Uterus (tissue), 4 donors: ENCODE measurements at regions of chr7 and their contacts with region 1.

Region 1: DNA sequence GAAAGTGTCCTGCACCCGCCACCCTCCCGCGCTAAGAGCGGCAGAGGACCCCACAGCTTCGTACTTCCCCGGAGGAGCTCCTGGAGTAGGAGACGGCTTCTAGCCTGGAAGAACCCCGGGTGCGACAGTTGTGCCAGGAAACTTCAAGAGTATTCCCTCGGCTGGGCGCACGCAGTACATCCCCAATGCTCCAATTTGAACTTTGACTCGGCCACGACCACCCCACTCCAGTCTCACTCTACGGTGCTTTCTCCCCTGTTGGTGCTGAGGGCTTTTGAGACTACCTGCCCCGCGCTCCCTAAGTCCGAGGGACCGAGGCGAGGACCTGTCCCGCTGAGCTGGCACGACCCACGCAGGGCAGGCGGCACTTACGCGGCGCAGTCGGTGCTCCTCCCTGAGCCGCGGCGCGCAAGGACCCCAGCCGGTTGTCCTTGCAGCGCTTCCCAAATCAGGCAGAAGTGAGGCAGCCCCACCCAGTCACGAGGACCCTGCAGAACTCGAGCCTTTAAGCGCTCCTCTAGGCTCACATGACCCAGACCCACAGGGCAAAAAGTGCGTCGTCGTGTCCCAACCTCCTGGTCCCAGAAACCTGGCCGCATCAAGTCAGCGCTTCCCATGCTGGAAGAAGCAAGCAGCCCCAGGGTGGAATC is at the start of gene CPVL:
- DNase-seq: peak; percentile 26 to 53
- H3K4me3 ChIP-seq: peak within 1 kb of the TSS; percentile 31 to 42
- H3K27ac ChIP-seq: peak within 1 kb of the TSS in 1 of 2 donors; percentile 54
- H3K4me1 ChIP-seq: peaks cover 0 to 4% of the 10 kb centered on the region in 2 donors
- H3K27me3 ChIP-seq: no peaks in the 10 kb centered on the region
- CTCF ChIP-seq: no peak
- POLR2A ChIP-seq: peak in 1 of 2 donors; percentile 13
- total RNA-seq, gene CPVL: 8.5 to 21.1 (median 14.5) TPM

Region 2: DNA sequence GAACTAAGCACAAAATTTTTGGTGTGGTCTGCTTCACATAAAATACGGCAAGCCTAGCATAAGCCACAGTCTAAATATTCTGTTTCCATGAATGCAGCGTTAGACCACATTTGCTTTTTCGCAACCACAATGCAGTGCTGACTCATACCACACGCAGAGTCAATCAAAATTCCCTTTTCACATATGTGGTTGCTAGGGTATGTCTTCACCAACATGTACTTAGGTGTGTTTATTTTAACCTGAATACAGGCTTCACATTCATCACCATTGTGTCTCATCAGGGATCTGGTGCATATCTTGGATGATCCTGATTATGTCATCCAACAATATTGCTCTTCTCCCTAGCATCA is 139.2 kb after region 1 on chr7:
- intact Hi-C with region 1: no loop called
- DNase-seq: no peak
- H3K4me3 ChIP-seq: no peak overlapping the region
- H3K27ac ChIP-seq: no peak overlapping the region
- H3K4me1 ChIP-seq: no peaks in the 10 kb centered on the region
- H3K27me3 ChIP-seq: no peaks in the 10 kb centered on the region
- CTCF ChIP-seq: no peak
- POLR2A ChIP-seq: no peak

Region 3: DNA sequence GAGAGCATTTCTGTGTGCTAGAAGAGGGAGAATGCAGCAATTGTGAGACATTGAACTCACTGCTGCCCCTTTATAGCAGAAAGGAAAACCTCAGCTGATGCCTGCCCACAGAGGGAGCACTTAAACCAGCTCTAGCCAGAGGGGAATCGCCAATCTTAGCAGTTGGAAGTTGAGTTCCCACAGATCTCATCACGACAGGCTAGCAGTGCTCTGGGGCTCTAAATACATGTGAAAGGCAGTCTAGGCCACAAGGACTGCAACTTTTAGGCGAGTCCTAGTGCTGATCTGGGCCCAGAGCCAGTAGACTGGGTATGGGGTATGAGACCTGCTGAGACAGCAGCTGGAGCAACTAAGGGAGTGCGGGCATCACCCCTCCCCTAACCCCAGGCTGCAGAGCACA is 392.2 kb after region 1 on chr7:
- intact Hi-C with region 1: loop called (anchors 10 kb)
- DNase-seq: no peak
- H3K4me3 ChIP-seq: no peak overlapping the region
- H3K27ac ChIP-seq: no peak overlapping the region
- H3K4me1 ChIP-seq: no peaks in the 10 kb centered on the region
- H3K27me3 ChIP-seq: no peaks in the 10 kb centered on the region
- CTCF ChIP-seq: no peak
- POLR2A ChIP-seq: no peak